Motor neuron (in vitro differentiated cells): ENCODE measurements at regions of chr14 and their contacts with region 1.

Region 1: GRCh38 chr14:86038387-86039042 is 508.6 kb downstream of the FLRT2 start:
- ATAC-seq: peak in 4 of 8 experiments; percentile 67 to 99 (median 98)
- H3K4me3 ChIP-seq: no peak overlapping the region
- H3K27ac ChIP-seq: no peak overlapping the region
- H3K4me1 ChIP-seq: no peaks in the 10 kb centered on the region

Region 2: GRCh38 chr14:85856430-85856829 is 182.1 kb before region 1 on chr14:
- in situ Hi-C with region 1: loop called in 1 of 9 experiments (anchors 25 kb)
- ATAC-seq: no peak
- H3K4me3 ChIP-seq: no peak overlapping the region
- H3K27ac ChIP-seq: no peak overlapping the region
- H3K4me1 ChIP-seq: peaks cover 4 to 7% of the 10 kb centered on the region in 2 donors